ENCODE measurements at regions of chr17 and their contacts with region 1.

Region 1: DNA sequence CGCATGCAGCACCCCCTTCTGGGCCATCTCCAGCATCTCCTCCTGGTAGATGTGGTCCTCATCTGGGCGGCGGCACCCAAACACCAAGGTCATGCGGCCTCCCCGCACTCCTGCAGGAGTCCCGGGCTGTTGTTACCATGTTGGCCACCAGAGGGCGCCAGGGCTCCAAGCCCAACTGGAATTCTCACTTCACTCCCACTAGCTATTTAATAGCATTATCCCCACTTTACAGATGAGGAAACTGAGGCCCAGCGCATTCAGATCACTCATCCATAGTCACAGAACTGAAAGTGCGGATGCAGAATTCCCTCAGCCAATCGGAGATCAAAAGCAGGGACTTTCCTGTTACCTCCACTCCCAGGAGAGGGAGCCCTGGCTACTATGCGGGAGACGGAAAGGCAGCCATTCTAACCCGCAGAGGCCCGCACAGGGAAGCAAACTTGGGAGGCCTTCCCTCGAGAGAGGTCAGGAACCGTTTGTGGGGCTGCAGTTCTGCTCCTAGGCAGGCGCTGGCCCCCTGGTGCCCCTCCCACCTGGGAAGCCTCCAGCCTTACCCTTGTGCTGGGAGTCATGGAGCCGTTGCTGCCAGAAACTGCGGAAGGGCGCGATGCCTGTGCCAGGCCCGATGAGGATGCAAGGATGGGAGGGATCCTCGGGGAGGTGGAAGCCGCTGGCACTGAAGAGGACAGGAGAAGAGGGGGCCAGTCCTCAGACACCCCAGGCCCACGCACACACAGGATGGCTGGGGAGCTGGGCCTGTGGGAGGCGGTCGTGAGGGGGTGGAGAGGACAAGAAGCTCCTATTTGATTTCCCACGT is 40.1 kb downstream of the NOS2 start:
- DNase-seq: peak in 1 of 2 donors; percentile 40
- ATAC-seq: no peak
- H3K4me3 ChIP-seq: no peak overlapping the region
- H3K27ac ChIP-seq: no peak overlapping the region
- H3K4me1 ChIP-seq: no peaks in the 10 kb centered on the region
- H3K27me3 ChIP-seq: no peaks in the 10 kb centered on the region
- CTCF ChIP-seq: peak; percentile 41 to 89 (median 75)
- POLR2A ChIP-seq: no peak

Region 2: DNA sequence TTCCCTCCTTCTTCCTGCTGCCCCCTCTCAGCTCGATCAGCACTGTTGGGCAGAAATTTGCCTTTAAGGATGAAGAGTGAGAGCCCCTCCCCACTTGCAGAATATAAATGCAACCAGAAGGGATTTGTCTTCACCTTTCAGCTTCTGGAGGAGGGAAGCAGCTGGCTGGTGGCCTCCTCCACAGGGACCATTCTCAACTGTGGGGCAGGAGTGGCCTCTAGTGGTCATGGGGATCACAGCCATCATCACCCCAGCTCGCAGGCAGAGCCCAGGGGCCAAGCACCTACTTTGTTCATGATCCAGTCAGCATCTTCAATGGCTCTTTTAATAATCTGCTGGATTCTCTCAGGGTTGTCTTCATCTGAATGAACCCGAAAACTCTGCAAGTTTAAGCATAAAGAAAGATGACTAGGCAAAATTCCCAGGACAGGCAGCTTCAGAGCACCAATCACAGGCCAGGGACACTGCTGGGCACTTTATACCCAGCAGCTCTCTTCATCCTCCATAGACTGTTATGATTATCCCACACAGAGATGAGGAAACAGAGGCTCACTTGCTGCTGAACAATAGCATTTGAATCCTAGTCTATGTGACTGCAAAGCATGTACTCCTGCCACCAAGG is 119.8 kb after region 1 on chr17:
- in situ Hi-C with region 1: loop called in 1 of 4 experiments (anchors 10 kb)
- intact Hi-C with region 1: loop called (anchors 2 kb)
- DNase-seq: peak; percentile 26 to 27
- ATAC-seq: peak; percentile 62 to 72
- H3K4me3 ChIP-seq: no peak overlapping the region
- H3K27ac ChIP-seq: no peak overlapping the region
- H3K4me1 ChIP-seq: no peaks in the 10 kb centered on the region
- H3K27me3 ChIP-seq: no peaks in the 10 kb centered on the region
- CTCF ChIP-seq: peak; percentile 29 to 70 (median 61)
- POLR2A ChIP-seq: no peak

Measured in gastrocnemius medialis (tissue), 4 donors.